ENCODE measurements at regions of chr22 and their contacts with region 1.

Region 1: DNA sequence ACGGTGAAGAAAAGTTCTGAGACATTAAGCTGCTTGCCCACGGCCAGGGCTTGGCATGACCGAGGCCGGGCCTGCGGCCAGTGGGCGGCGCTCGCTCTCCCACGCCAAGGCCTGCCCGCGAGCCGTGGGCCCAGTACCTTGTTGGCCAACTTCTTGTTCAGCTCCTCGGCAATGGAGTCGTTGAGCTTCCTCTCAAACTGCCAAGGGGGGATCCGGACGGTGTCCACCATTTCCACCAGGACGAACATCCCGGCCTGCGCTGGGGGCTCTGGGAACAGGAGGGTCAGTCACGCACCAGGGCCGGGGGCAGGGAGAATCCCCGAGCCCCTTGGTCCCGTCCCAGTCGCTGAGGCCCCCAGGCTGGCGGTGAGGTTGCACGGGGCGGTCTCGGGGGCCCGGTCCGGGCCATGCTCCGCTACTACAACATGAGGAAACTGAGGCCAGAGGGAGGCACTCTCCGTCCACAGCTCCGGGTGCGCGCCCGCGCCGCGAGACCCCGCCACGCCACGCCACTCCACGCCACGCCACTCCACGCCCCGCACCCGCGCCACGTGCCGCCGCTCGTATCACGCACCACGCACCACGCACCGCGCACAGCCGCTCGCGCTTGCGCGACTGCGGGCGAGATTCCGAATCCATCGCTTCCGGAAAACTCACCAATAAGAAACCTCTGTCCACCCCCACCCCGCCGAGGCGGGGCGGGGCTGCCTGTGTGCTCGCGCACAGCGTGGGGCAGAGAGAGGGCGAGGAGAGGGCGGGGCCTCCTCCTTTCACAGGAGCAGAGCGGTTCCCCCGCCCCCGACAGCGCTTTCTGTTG is at the start of gene POLR3H:
- H3K4me3 ChIP-seq: peak within 1 kb of the TSS; percentile 72
- H3K27ac ChIP-seq: peak within 1 kb of the TSS; percentile 93
- H3K4me1 ChIP-seq: peaks cover 8% of the 10 kb centered on the region
- CTCF ChIP-seq: peak; percentile 88

Region 2: GRCh38 chr22:41458161-41458728 is 85.8 kb before region 1 on chr22:
- CTCF ChIA-PET with region 1: no interaction called
- POLR2A ChIA-PET with region 1: no interaction called
- H3K4me3 ChIP-seq: no peak overlapping the region
- H3K27ac ChIP-seq: no peak overlapping the region
- H3K4me1 ChIP-seq: no peaks in the 10 kb centered on the region
- CTCF ChIP-seq: no peak

Region 3: DNA sequence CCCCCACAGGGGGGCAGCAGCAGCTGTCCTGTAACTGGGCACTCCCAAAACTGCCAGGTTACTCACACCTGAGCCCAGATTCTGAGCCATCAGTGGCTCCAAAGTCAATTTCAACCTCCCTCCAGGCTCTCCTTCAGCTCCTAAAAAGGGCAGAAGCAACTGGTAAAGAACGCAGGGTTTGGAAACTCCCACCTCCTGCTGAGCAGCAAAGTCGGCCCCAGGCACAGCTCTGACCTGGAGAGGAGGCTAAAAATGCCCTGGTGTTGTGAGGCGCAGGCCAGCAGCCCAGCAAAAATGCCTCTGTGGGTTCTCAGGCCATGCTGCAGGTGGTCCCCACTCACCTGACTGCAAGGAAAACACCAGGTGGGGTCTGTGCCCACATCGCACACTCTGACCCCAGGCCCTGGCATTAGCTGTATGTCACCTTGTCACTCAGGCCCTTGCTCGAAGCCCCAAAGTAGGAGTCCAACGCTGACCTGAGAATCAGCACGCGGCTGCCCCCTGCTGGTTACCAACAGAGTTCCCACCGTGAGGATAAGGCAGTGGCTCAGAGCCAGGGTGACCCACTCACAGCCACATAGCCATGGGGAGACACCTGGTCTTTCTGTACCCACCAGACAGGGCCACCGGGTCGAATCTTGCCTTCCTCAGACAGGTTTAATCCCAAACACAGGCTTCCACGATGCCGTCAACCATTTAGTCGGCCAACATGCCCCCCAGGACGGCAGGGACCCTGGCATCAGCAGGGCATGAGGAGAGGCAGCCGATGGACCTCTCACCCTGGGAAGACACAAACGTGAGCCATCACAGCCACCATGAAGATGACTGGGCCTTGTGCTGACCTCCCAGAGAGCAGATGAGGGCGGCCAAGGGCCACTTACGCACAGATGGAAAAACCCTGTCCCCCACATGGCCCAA is 10.9 kb before region 1 on chr22:
- CTCF ChIA-PET with region 1: interaction called, 10 read pairs
- POLR2A ChIA-PET with region 1: no interaction called
- H3K4me3 ChIP-seq: no peak overlapping the region
- H3K27ac ChIP-seq: no peak overlapping the region
- H3K4me1 ChIP-seq: no peaks in the 10 kb centered on the region
- CTCF ChIP-seq: peak; percentile 72

Region 4: DNA sequence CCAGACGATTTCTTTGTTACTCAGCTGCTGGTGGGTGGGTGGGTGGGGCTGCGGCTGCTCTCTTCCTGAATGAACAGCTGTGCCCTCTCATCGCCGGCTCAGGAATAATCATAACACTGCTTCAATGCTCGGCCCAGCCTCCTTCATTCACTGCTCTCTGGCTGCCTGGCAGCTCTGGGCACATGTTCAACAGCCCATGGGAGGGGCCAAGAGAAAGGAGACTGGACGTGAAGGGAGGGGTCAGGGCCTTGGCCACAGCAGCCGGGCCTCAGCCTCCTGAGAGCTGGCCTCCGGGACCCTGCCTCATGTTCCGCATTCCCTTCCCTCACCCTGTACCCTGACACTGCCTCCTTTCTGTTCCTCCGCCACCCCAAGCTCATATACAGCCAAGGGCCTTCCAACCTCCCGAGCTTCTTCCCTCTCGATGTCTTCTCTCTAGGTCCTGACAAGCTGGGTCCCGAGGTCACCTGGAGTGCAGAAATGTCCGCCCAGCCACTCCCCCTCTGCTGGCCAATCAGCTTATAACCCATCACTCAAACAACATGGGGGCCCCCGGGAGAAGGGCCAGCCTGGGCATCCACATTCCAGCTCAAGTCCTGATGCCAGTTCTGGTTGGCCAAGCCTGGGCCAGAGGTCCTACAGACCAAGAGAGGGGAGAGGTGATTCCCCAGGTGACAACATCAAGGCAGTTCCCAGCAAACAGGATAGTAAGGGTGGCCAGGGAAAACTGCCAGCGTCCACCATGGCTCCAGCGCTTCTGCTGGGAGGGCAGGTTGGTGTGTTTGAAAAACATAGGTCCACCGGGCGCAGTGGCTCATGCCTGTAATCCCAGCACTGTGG is 13.6 kb after region 1 on chr22:
- CTCF ChIA-PET with region 1: interaction called, 15 read pairs
- POLR2A ChIA-PET with region 1: interaction called, 7 read pairs
- H3K4me3 ChIP-seq: no peak overlapping the region
- H3K27ac ChIP-seq: no peak overlapping the region
- H3K4me1 ChIP-seq: no peaks in the 10 kb centered on the region; the same call in 1 of the 2 replicates
- CTCF ChIP-seq: no peak

Measured in HEK293 (cell line).